Activated CD4-positive, alpha-beta T cell treated with anti-CD3 and anti-CD28 coated beads, Interleukin-2, amount 10 ng/mL, durations not matched to agents 24 days and 14 days (primary cell): ENCODE measurements at regions of chr17 and their contacts with region 1.

Region 1: DNA sequence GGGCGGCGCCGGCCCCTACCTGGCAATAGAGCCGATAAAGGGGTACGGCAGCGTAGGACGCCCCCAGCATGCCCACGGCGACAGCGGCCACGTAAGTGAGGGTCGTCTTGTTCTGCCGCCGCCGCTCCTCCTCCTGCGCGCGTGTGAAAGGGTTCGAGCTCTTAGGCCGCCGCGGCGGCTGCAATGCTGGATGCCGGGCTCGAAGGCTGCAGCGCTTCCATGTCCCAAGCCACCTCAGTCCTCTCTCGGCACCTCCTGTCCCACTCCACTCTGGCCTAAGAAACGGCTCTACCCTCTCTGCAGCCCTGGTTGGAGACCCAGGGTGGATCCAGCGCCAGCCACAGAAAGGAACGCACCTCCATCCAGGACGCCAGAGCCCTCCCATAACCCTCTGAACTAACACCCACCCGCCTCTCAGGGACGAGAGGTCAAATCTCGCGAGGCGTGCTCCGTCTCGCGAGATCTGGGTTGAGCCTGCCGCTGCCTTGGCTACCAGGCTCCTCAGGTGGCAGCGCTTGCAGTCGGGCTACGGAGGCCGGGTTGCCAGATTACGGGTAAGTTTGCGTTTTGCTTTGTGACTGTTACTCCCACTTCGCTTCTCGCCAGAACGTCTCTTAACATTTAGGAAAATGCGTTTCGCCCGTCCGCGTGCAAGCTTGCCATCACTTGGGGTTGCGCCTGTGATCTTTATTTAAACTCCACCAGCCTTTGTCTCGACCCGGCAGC is at the starts of genes COX11 and STXBP4:
- DNase-seq: peak; percentile 99
- H3K4me3 Mint-ChIP-seq: no peak within 1 kb of the TSS
- H3K27ac Mint-ChIP-seq: no peak within 1 kb of the TSS
- H3K4me1 Mint-ChIP-seq: peaks cover 22% of the 10 kb centered on the region
- H3K27me3 Mint-ChIP-seq: no peaks in the 10 kb centered on the region
- total RNA-seq, gene COX11: 46.1 and 48.2 TPM in 2 replicates
- total RNA-seq, gene STXBP4: 8.2 and 9.2 TPM in 2 replicates

Region 2: DNA sequence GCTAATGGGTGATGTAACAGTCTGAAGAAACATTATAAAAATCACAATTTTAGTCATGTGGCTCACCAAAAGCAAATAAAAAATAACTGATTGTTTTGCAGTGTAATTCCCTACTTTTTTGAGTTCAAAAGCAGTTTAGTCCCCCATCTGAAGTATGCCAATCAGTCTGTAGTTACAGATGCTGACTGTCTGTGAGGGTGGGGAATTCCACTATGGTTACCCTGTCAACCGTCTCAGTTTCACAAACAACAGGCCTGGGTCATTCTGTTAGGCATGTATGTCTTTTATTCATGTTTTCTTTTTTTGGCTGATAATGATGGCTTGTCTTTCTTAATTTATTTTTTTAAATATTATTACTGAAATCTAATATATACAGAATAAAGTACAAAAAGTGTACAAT is 69.4 kb after region 1 on chr17:
- intact Hi-C with region 1: loop called (anchors 2 kb)
- DNase-seq: peak; percentile 81
- H3K4me3 Mint-ChIP-seq: no peak overlapping the region
- H3K27ac Mint-ChIP-seq: no peak overlapping the region
- H3K4me1 Mint-ChIP-seq: peaks cover 21% of the 10 kb centered on the region
- H3K27me3 Mint-ChIP-seq: no peaks in the 10 kb centered on the region

Region 3: GRCh38 chr17:55053855-55054254 is 85.4 kb after region 1 on chr17:
- intact Hi-C with region 1: no loop called
- DNase-seq: no peak
- H3K4me3 Mint-ChIP-seq: no peak overlapping the region
- H3K27ac Mint-ChIP-seq: no peak overlapping the region
- H3K4me1 Mint-ChIP-seq: no peaks in the 10 kb centered on the region
- H3K27me3 Mint-ChIP-seq: no peaks in the 10 kb centered on the region

Region 4: DNA sequence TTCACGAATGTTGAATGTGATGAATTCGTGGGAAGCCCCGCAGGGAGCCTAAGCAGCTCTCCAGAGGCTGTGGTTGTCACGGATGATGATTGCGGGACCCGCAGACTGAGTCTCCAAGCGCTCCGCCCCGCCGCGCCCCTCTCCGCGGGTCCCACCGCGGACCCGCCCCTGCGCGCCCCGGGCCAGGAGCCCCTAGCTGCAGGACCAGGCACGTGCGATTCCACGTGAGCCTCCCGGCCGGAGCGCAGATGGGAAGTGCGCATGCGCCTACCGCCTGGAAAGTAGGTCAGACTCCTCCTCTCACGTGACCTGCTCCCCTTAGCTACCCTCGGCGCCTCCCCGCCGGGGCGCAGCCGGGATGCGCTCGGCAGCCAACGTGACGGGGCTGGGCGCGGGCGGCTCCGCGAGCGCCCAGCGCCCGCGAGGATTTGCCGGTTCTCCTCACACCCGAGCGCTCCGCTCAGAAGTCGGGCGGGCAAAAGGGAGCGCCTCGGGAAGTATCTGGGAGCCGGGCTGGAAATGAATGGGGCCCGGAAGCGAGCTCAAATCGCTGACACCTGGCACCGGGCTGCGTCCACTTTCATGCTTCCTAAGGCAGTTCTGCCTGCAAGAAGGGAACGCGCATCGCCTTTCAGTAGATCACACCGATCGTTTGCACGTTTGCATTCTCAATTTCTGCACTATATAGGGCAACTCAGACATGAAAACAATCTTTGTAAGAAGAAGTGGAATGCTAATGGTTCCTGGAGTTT is 269.9 kb after region 1 on chr17:
- intact Hi-C with region 1: loop called (anchors 1 kb)
- DNase-seq: peak; percentile 93
- H3K4me3 Mint-ChIP-seq: peak overlapping the region; percentile 79
- H3K27ac Mint-ChIP-seq: no peak overlapping the region
- H3K4me1 Mint-ChIP-seq: peaks cover 13% of the 10 kb centered on the region
- H3K27me3 Mint-ChIP-seq: peaks cover 33% of the 10 kb centered on the region

Region 5: DNA sequence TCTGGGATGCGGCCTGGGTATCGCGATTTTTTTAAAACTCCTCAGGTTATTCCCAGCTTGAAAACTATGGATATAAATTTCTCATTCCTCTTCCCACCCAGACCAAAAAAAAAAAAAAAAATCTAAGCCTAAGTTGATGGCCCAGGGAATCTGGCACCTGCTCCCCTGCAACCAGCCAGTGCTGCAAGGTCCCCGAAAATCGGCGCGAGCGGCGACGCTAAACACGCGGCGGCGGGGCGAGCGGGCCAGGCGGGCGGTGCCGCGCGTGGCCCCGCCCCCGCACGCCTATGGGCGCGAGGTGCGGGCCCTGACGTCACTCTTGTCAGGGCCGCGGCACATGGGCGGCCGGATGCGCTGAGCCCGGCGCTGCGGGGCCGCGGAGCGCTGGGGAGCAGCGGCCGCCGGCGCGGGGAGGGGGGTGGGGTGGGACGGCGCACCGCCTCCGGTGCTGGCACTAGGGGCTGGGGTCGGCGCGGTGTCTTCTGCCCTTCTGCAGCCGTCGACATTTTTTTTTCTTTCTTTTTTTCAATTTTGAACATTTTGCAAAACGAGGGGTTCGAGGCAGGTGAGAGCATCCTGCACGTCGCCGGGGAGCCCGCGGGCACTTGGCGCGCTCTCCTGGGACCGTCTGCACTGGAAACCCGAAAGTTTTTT is 296.3 kb after region 1 on chr17 and contains the start of gene HLF:
- intact Hi-C with region 1: loop called (anchors 1 kb)
- DNase-seq: peak; percentile 93
- H3K4me3 Mint-ChIP-seq: peak within 1 kb of the TSS; percentile 78
- H3K27ac Mint-ChIP-seq: no peak within 1 kb of the TSS
- H3K4me1 Mint-ChIP-seq: peaks cover 13% of the 10 kb centered on the region
- H3K27me3 Mint-ChIP-seq: peaks cover 77% of the 10 kb centered on the region
- total RNA-seq, gene HLF: 0.92 and 1.3 TPM in 2 replicates

Region 6: GRCh38 chr17:55341432-55341831 is 373.0 kb after region 1 on chr17:
- intact Hi-C with region 1: loop called (anchors 1 kb)
- DNase-seq: no peak
- H3K4me3 Mint-ChIP-seq: no peak overlapping the region
- H3K27ac Mint-ChIP-seq: no peak overlapping the region
- H3K4me1 Mint-ChIP-seq: peaks cover 43% of the 10 kb centered on the region
- H3K27me3 Mint-ChIP-seq: peaks cover 27% of the 10 kb centered on the region

Region 7: GRCh38 chr17:56020369-56020768 is 1051.9 kb after region 1 on chr17:
- intact Hi-C with region 1: loop called (anchors 10 kb)
- DNase-seq: no peak
- H3K4me3 Mint-ChIP-seq: peak overlapping the region; percentile 4
- H3K27ac Mint-ChIP-seq: peak overlapping the region; percentile 58
- H3K4me1 Mint-ChIP-seq: peaks cover 26% of the 10 kb centered on the region
- H3K27me3 Mint-ChIP-seq: peaks cover 5% of the 10 kb centered on the region